Kidney (tissue), 22 donors: ENCODE measurements at regions of chr10 and their contacts with region 1.

Region 1: DNA sequence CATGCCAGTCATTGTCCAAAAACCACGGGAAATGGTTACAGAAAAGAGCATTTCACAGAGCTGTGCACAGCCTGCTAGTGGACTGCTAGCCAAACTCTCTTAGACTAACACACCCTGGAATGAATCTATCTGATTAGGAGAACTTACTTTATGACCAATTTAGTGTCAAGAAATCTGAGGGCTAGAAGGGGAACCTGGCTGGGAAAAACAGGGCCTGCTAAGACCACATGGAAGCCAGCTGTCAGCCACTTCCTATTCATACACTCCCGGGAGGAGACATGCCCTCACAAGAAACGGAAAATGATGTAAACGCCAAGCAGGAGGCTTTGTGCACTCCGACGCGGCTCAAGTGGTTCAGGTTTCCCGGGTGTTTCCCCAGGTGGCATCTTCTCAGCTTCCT is 54.8 kb downstream of the MPP7 start:
- DNase-seq: peak in 2 of 5 donors; percentile 19 to 40
- H3K4me3 ChIP-seq: no peak overlapping the region
- H3K27ac ChIP-seq: no peak overlapping the region
- H3K4me1 ChIP-seq: no peaks in the 10 kb centered on the region
- H3K27me3 ChIP-seq: no peaks in the 10 kb centered on the region
- CTCF ChIP-seq: no peak

Region 2: DNA sequence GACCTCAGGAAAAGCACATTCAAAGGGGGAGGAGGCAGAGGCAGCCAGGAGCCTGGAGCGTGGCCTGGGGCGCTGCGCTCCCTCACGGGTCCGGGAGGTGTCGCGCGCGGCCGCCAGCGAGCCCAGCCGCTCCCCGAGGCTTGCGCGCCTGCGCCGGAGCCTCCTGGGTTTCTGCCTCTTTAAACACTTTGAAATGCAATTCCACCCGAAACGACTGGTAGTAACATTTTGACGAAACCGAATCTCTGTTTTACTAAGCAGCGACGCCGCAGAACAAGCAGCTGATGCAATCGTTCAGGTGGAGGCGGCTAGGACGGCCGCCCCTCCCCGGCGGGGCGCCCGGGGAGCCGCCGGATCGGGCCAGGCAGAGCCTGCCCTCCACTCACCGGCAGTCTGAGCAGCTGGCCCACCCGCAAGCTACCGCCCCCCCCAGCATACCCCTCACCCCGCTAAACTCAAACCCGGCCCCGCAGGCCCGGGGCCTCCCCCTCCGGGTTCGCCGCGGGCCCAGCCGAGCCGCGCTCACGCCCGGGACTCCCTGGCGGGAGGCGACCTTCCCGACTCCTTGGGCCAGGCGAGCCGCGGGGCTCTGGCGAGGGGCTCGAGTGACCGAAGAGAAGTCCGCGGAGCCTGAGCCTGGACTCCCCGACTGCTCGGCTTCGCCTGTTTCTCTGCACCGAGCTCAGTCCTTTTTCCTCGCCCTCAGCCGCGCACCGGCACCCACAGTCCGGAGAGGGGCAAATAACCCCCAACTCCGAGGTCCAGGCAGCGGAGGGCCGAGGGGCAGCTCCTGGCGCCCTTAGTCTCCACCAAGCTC is 505.7 kb before region 1 on chr10:
- intact Hi-C with region 1: no loop called
- DNase-seq: peak; percentile 86 to 94 (median 89)
- H3K4me3 ChIP-seq: peak overlapping the region; percentile 37 to 64 (median 64)
- H3K27ac ChIP-seq: no peak overlapping the region
- H3K4me1 ChIP-seq: peaks cover 0 to 22% (median 0%) of the 10 kb centered on the region in 3 donors
- H3K27me3 ChIP-seq: peaks cover 45% of the 10 kb centered on the region
- CTCF ChIP-seq: peak; percentile 75

Region 3: GRCh38 chr10:28387141-28387540 is 139.0 kb after region 1 on chr10:
- intact Hi-C with region 1: loop called (anchors 5 kb)
- DNase-seq: no peak
- H3K4me3 ChIP-seq: no peak overlapping the region
- H3K27ac ChIP-seq: no peak overlapping the region
- H3K4me1 ChIP-seq: no peaks in the 10 kb centered on the region
- H3K27me3 ChIP-seq: no peaks in the 10 kb centered on the region
- CTCF ChIP-seq: no peak